Adrenal gland (tissue), 19 donors: ENCODE measurements at regions of chr5 and their contacts with region 1.

Region 1: GRCh38 chr5:112921833-112922817 is at the start of gene REEP5:
- DNase-seq: peak; percentile 80 to 91 (median 87)
- H3K4me3 ChIP-seq: peak within 1 kb of the TSS; percentile 26 to 98 (median 81)
- H3K27ac ChIP-seq: peak within 1 kb of the TSS; percentile 79 to 98 (median 97)
- H3K4me1 ChIP-seq: peaks cover under 1 to 43% of the 10 kb centered on the region in 2 donors
- H3K27me3 ChIP-seq: no peaks in the 10 kb centered on the region
- CTCF ChIP-seq: peak; percentile 25 to 95 (median 72)
- POLR2A ChIP-seq: peak; percentile 94 to 97
- total RNA-seq, gene REEP5: 84.6 to 198 (median 167) TPM

Region 2: DNA sequence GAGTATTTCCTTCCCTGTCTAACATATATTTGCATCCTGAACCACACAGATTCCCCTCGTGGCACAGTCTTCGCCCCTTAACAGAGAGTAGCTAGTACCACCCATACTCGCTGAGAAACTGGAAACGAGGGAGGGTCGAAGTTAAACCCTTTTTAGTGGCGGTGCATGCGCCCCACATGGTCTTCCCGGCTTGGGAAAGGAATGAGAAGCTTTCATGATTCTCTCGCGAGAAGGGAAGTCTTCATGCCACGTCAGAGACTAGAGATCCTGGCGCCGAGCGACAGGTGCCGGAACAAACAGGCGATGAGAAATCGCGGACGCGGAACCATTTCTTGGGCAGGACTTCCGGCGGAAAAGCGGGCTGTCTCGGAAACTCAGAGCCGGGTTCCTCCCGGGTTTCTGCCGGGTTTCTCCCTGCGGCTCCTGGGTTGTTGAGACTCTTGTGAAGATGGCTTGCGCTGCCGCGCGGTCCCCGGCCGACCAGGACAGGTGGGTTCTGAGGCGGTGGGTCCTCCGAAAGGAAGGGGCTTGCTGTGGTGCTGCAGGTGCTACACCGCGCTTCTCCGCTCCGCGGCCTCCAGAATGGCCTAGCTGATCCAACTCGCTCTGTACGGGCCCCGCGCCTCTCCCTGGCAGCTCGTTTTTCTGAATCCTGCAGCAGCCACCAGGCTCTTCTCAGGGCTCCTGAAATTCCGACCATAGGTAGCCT is 61.0 kb before region 1 on chr5 and contains the start of gene SRP19:
- intact Hi-C with region 1: loop called in 1 of 2 experiments (anchors 10 kb)
- DNase-seq: peak; percentile 95 to 98 (median 97)
- H3K4me3 ChIP-seq: peak within 1 kb of the TSS; percentile 65 to 88 (median 83)
- H3K27ac ChIP-seq: peak within 1 kb of the TSS; percentile 66 to 86 (median 79)
- H3K4me1 ChIP-seq: peaks cover 9 to 31% of the 10 kb centered on the region in 2 donors
- H3K27me3 ChIP-seq: no peaks in the 10 kb centered on the region
- CTCF ChIP-seq: peak in 2 of 6 experiments; percentile 11 to 13
- POLR2A ChIP-seq: peak; percentile 62 to 80
- total RNA-seq, gene SRP19: 18.4 to 136 (median 43.8) TPM

Region 3: GRCh38 chr5:113202746-113203716 is 280.9 kb after region 1 on chr5:
- intact Hi-C with region 1: no loop called
- DNase-seq: peak in 3 of 7 donors; percentile 26 to 83 (median 28)
- H3K4me3 ChIP-seq: no peak overlapping the region
- H3K27ac ChIP-seq: no peak overlapping the region
- H3K4me1 ChIP-seq: peaks cover 0 to 13% of the 10 kb centered on the region in 2 donors
- H3K27me3 ChIP-seq: no peaks in the 10 kb centered on the region
- CTCF ChIP-seq: no peak
- POLR2A ChIP-seq: no peak